ENCODE measurements at regions of chr7 and their contacts with region 1.

Region 1: DNA sequence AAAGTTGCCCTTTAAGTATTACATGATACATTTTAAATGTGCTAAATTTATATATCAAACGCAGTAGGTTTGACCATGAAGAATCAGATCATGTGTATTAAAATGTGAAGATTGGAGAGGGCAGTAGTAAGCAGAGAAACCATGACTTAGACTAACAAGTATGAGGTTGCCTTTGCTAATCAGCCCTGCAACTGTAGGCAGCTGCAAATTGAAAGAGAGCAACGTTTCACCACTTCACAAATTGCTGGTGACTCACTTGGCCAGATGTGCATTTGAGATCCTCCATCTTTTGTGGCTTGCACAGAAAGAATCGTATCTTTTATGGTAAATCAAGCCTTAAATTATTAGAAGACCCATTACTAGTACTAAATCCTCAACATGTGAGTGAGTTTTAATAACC is 10.1 kb upstream of the SEMA3A start:
- DNase-seq: no peak
- ATAC-seq: no peak
- H3K4me3 ChIP-seq: no peak overlapping the region
- H3K27ac ChIP-seq: no peak overlapping the region
- H3K4me1 ChIP-seq: no peaks in the 10 kb centered on the region
- H3K27me3 ChIP-seq: no peaks in the 10 kb centered on the region
- CTCF ChIP-seq: no peak
- EP300 ChIP-seq: no peak
- POLR2A ChIP-seq: no peak
- RAD21 ChIP-seq: no peak

Region 2: GRCh38 chr7:83677180-83677866 is 527.3 kb before region 1 on chr7:
- CTCF ChIA-PET with region 1: no interaction called
- POLR2A ChIA-PET with region 1: no interaction called
- in situ Hi-C with region 1: no loop called
- intact Hi-C with region 1: loop called (anchors 5 kb)
- DNase-seq: no peak
- ATAC-seq: no peak
- H3K4me3 ChIP-seq: no peak overlapping the region
- H3K27ac ChIP-seq: no peak overlapping the region
- H3K4me1 ChIP-seq: no peaks in the 10 kb centered on the region
- H3K27me3 ChIP-seq: no peaks in the 10 kb centered on the region
- CTCF ChIP-seq: no peak
- EP300 ChIP-seq: no peak
- POLR2A ChIP-seq: no peak
- RAD21 ChIP-seq: no peak

Region 3: GRCh38 chr7:84218681-84219080 is 14.0 kb after region 1 on chr7:
- CTCF ChIA-PET with region 1: no interaction called
- POLR2A ChIA-PET with region 1: no interaction called
- in situ Hi-C with region 1: no loop called
- intact Hi-C with region 1: no loop called
- DNase-seq: no peak
- ATAC-seq: no peak
- H3K4me3 ChIP-seq: no peak overlapping the region
- H3K27ac ChIP-seq: no peak overlapping the region
- H3K4me1 ChIP-seq: no peaks in the 10 kb centered on the region
- H3K27me3 ChIP-seq: no peaks in the 10 kb centered on the region
- CTCF ChIP-seq: no peak
- EP300 ChIP-seq: no peak
- POLR2A ChIP-seq: no peak
- RAD21 ChIP-seq: no peak